Esophagus squamous epithelium (tissue), 5 donors: ENCODE measurements at regions of chr17 and their contacts with region 1.

Region 1: GRCh38 chr17:3048767-3049471 is 14.5 kb downstream of the OR1D5 start:
- DNase-seq: peak; percentile 84
- H3K4me3 ChIP-seq: peak overlapping the region; percentile 63 to 78 (median 72)
- H3K27ac ChIP-seq: peak overlapping the region; percentile 66 to 84 (median 80)
- H3K4me1 ChIP-seq: peaks cover 3 to 16% (median 4%) of the 10 kb centered on the region in 3 donors
- H3K27me3 ChIP-seq: peaks cover 0 to 3% (median 0%) of the 10 kb centered on the region in 4 donors
- CTCF ChIP-seq: peak; percentile 67 to 95 (median 76)
- POLR2A ChIP-seq: no peak

Region 2: GRCh38 chr17:2954898-2955445 is 93.9 kb before region 1 on chr17:
- intact Hi-C with region 1: no loop called
- DNase-seq: no peak
- H3K4me3 ChIP-seq: no peak overlapping the region
- H3K27ac ChIP-seq: peak overlapping the region; percentile 27 to 70 (median 63)
- H3K4me1 ChIP-seq: peaks cover 6 to 37% (median 21%) of the 10 kb centered on the region in 3 donors
- H3K27me3 ChIP-seq: no peaks in the 10 kb centered on the region
- CTCF ChIP-seq: no peak
- POLR2A ChIP-seq: no peak

Region 3: GRCh38 chr17:3636154-3636907 is 587.4 kb after region 1 on chr17 and contains the starts of genes CTNS and SHPK:
- intact Hi-C with region 1: loop called (anchors 10 kb)
- DNase-seq: peak; percentile 83
- H3K4me3 ChIP-seq: peak within 1 kb of the TSS; percentile 68 to 100 (median 82)
- H3K27ac ChIP-seq: peak within 1 kb of the TSS; percentile 93 to 99 (median 97)
- H3K4me1 ChIP-seq: peaks cover 13 to 33% (median 17%) of the 10 kb centered on the region in 3 donors
- H3K27me3 ChIP-seq: no peaks in the 10 kb centered on the region
- CTCF ChIP-seq: no peak
- POLR2A ChIP-seq: peak in 3 of 4 donors; percentile 17 to 59 (median 29)
- total RNA-seq, gene CTNS: 5.9 to 14.3 (median 9.8) TPM
- total RNA-seq, gene SHPK: 10.8 to 16.8 (median 14.3) TPM